Cardiac septum (tissue), 1 donor: ENCODE measurements at regions of chr21 and their contacts with region 1.

Region 1: DNA sequence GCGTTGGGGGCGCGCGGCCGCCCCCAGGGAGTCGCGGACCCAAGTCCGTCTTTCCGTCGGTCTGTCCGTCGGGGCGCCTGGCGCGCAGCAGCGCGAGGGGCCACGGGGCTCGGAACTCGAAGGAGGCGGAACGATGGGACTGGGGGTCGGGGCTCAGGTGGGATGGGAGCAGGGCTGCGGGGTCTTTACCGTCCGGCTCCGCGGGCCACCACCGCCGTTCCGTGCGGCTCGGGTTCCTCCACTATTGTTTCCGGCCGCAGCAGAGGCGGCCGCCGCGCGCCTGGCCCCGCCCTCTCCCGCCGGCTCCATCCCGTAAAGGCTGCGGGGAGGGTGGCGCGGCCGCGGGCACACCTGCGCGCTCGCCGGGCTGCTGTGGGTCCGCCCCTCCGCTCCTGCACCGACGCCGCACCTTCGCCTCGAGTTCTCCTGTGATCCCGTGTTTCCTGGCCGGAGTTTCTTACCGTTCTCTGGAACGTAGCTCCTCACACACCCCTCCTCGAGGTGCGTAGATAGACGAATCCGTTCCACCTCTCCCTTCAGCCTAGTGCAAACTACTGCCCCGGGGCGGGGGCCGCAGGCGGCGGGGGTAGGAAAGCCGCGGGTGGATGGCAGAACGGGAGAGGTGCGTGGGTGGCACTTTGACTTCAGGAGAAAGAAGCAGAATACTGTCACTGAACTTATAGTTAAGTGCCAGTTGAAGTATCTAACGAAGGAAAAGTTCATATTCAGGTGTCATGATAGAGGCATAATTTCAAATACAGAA is at the start of gene C21orf91:
- DNase-seq: peak; percentile 96
- total RNA-seq, gene C21orf91: 21.3 TPM

Region 2: GRCh38 chr21:17611414-17612022 is 207.8 kb before region 1 on chr21:
- intact Hi-C with region 1: loop called (anchors 10 kb)
- DNase-seq: peak; percentile 86

Region 3: DNA sequence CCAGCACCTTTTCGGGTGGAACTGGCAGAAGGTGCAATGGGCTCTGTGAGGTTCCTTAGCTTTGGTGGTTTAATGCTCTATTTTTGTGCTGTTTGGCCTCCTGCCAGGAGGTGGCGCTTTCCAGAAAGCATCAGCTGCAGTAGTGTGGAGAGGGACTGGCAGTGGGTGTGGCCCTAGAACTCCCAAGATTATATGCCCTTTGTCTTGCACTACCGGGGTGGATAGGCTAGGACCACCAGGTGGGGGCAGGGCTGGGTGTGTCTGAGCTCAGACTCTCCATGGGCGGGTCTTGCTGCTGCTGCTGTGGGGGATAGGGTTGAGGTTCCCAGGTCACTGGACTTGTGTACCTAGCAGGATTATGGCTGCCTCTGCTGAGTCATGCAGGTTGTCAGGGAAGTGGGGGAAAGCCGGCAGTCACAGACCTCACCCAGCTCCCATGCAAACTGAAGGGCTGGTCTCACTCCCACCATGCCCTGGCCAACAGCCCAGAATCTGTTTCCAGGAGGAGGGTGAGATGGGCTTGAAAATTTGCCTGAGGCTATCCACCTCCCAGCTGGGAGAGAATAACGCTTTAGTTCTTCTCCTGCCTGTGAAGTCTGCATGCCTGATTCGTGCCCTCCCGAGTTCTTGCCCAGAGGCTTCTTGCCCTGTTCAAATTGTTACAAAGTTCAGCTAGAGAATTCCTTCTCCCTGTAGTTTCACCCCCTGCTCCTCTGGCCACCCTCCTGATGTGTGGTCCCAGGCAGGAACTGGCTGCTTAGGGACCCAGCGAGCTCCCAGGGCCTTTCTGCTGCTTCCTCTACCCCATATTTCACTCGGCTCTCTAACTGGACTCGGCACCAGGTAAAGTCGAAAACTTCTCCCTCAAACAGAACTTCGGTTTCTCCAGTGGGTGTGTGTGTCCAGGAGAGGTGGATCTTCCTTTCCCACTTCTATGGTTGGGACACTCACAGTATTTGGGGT is 130.1 kb before region 1 on chr21:
- intact Hi-C with region 1: loop called (anchors 10 kb)
- DNase-seq: peak; percentile 77

Region 4: GRCh38 chr21:17903029-17903806 is 83.9 kb after region 1 on chr21:
- intact Hi-C with region 1: loop called (anchors 2 kb)
- DNase-seq: no peak